ENCODE measurements at regions of chr14 and their contacts with region 1.

Region 1: GRCh38 chr14:54691525-54692283 is 124.8 kb downstream of the SAMD4A start:
- DNase-seq: peak; percentile 65

Region 2: GRCh38 chr14:54642801-54643697 is 48.7 kb before region 1 on chr14:
- CTCF ChIA-PET with region 1: no interaction called
- POLR2A ChIA-PET with region 1: no interaction called
- DNase-seq: no peak

Region 3: GRCh38 chr14:54653712-54654464 is 37.8 kb before region 1 on chr14:
- CTCF ChIA-PET with region 1: no interaction called
- POLR2A ChIA-PET with region 1: no interaction called
- DNase-seq: no peak

Region 4: DNA sequence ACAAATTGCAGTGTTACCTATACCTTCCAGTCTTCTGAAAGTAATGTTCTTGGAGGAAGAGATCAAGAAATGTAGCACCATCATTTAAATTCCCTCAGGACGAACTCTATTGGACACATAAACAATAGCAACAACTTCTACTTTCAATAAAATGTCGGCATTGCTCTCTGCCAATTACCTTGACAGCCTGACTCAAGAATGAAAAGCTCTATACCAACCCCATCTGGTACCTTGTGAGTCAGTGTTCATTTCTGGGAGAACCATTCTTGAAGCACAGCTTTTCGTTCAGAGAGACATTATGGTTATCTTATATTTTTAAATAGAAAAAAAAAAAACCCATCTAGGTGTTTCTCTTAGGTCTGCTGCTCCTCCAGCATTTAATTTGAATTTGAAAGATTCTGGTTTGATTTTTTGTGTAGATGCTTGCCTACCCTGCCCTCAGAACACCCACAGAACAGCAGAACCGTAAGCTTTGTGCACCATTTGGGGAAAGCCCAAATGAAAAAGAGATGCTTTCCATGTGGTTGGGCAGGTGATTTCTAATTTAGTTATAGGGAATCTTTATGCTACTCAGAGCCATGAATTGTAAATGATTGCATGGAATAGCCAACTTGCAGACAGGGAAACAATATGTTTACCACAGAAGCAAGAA is 31.2 kb after region 1 on chr14:
- CTCF ChIA-PET with region 1: interaction called, 12 read pairs
- POLR2A ChIA-PET with region 1: no interaction called
- DNase-seq: peak; percentile 37

Region 5: DNA sequence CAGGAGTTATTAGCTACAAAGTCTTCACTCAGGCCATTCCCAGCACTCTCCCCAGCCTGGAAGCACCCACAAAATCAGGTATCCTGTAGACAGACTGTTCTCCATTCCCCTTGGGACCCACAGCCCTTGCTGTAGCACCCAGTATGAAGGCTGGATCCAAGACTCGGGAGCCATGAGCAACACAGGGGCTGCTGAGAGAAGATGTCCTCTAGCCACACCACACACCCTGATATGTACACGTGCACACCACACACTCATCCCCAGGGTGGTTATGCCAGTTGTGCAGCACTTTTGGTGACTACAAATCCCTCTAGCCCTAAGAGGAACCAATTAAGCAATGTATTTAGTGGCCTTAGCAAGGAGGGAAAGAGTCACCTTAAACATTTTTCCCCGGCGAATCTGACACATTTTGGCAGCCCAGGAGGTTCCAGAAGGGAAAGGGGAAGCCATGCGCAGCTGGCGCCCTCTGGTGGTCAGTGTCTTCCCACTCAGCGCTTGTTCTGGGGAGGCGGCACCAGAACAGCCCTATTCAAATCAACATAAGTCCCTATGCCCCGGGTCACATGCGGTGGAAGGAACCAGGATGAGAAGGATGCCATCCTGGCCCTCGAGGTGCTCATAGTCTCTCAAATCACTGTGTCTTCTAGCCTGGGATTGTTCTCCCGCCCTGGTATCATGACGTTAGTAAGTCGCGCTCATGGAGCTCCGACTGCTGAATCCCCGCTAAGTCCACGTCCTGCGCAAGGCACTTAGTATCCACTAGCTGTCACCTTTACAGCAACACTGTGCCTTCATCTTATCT is 114.0 kb after region 1 on chr14:
- CTCF ChIA-PET with region 1: no interaction called
- POLR2A ChIA-PET with region 1: no interaction called
- DNase-seq: peak; percentile 85